ENCODE measurements at regions of chr6 and their contacts with region 1.

Region 1: GRCh38 chr6:131909408-131910218 is 41.6 kb downstream of the CCN2 start:
- DNase-seq: no peak
- ATAC-seq: peak; percentile 94
- H3K4me3 ChIP-seq: no peak overlapping the region
- H3K27ac ChIP-seq: no peak overlapping the region
- H3K4me1 ChIP-seq: no peaks in the 10 kb centered on the region
- H3K27me3 ChIP-seq: no peaks in the 10 kb centered on the region
- CTCF ChIP-seq: peak; percentile 75 to 80 (median 77)
- EP300 ChIP-seq: no peak
- POLR2A ChIP-seq: no peak
- RAD21 ChIP-seq: peak; percentile 65

Region 2: DNA sequence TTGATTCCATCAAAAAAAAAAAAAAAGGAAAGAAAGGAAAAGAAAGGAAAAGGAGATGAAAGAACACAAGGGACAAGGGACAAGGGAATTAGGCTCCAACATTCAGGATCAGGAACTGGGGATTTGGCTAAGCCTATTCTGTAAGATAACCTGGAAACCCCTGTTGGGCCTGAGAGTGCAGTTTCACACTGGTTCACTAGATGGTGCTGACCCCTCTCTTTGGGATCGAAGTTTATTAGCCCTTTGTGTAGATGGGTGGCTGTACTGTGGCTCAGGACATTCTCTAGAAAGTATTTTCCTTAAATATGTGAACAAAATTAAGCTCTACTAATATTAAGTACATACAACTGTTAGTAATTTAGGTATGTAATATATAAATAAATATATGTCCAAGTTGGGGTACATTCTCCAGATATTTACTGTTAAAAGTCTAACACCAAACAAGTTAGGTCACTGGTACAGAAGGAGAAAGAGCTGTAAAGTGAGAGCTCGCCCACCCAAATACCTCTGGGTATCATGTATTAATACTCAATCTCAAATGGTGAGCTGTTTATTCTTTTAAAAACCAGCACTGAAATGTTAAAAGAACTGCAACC is 214.7 kb before region 1 on chr6:
- CTCF ChIA-PET with region 1: interaction called, 41 read pairs
- POLR2A ChIA-PET with region 1: no interaction called
- RAD21 ChIA-PET with region 1: interaction called, 14 read pairs
- SMC1A ChIA-PET with region 1: interaction called, 7 read pairs
- in situ Hi-C with region 1: loop called (anchors 10 kb)
- intact Hi-C with region 1: loop called (anchors 1 kb)
- DNase-seq: no peak
- ATAC-seq: peak; percentile 95
- H3K4me3 ChIP-seq: no peak overlapping the region
- H3K27ac ChIP-seq: no peak overlapping the region
- H3K4me1 ChIP-seq: no peaks in the 10 kb centered on the region
- H3K27me3 ChIP-seq: no peaks in the 10 kb centered on the region
- CTCF ChIP-seq: peak; percentile 61 to 77 (median 72)
- EP300 ChIP-seq: no peak
- POLR2A ChIP-seq: no peak
- RAD21 ChIP-seq: peak; percentile 79

Region 3: DNA sequence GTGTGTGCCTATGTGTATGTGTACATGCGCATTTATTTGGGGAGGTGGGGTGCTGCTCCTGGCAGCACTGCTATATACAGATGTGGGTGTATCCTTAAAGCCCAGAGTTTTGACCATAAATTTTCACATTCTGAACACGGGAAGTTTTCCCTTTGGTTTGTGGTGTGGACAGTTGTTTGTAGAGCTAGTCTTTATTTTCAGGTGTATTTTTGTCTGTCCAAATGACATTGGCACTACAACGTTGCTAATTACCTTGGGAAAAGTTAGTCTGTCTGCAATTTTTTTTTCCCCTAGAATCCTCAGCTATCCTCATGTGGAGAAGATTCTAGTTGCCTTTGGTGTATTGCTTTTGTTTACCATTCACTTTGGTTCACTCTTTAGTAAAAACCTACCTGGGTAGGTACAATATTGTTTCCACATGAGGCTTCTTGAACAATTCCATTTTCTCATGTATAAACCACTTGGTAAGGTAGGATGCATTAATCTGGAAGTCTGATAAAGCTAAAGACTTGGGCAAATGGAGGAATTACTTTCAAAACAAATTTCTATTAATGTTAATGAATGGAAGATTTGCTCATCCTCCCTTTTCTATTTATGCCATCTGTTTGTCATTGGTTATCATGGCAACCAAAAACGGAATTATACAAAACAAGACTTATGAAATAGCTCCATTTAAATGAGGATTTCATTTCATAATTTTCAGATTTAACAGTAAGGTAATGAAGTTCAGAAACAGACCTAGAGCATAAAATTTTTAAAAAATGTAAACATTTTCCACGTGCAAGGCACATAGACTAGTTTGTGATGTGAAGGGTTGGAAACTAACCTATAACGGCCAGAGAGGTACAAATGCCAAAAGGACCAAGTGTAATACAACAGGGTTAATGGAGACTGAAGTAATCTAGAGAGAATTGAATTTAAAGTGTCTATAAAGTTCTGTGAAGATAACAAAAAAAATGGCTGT is 37.7 kb after region 1 on chr6:
- CTCF ChIA-PET with region 1: interaction called, 9 read pairs
- POLR2A ChIA-PET with region 1: no interaction called
- RAD21 ChIA-PET with region 1: no interaction called
- SMC1A ChIA-PET with region 1: no interaction called
- in situ Hi-C with region 1: no loop called
- intact Hi-C with region 1: loop called (anchors 1 kb)
- DNase-seq: no peak
- ATAC-seq: no peak
- H3K4me3 ChIP-seq: no peak overlapping the region
- H3K27ac ChIP-seq: no peak overlapping the region
- H3K4me1 ChIP-seq: no peaks in the 10 kb centered on the region
- H3K27me3 ChIP-seq: peaks cover 0 to 6% of the 10 kb centered on the region in 2 experiments; a peak in 3 of 4 replicates
- CTCF ChIP-seq: no peak
- EP300 ChIP-seq: no peak
- POLR2A ChIP-seq: no peak
- RAD21 ChIP-seq: no peak